Lower leg skin (tissue), 4 donors: ENCODE measurements at regions of chr6 and their contacts with region 1.

Region 1: GRCh38 chr6:12125396-12125795 is 113.3 kb downstream of the HIVEP1 start:
- DNase-seq: no peak
- H3K4me3 ChIP-seq: no peak overlapping the region
- CTCF ChIP-seq: no peak
- POLR2A ChIP-seq: no peak

Region 2: DNA sequence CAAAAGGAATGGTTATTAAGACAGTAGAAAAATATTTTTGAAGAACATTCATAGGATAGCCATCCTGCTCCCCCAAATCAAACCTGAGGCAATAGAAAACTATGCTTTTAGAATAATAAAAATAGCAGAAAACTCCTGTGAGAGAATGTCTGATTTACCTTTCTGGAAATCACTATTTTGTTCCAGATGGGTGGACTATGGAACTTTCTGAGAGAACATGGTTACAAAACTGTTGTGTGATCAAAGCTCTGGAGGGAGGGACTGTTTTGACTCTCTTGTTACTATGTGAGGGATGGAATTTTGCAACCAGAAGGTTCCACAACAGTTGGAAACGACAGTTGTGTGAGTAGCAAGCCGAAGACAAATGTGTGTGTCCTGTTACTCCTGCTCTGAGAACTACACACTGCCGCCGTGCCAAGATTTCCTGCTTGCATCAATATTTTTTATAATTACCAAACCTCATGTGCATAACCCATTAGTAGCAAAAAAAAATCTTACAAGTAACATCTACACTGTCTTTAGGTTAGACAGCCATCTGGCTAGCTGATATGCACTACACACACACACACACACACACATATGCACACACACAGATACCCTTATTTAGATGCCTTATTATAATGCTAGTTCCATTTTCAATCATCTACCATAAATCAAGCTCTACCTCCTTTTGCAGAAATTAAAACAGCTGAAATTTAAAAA is 124.2 kb before region 1 on chr6:
- intact Hi-C with region 1: no loop called
- DNase-seq: peak; percentile 62 to 92
- H3K4me3 ChIP-seq: no peak overlapping the region
- CTCF ChIP-seq: no peak
- POLR2A ChIP-seq: no peak

Region 3: DNA sequence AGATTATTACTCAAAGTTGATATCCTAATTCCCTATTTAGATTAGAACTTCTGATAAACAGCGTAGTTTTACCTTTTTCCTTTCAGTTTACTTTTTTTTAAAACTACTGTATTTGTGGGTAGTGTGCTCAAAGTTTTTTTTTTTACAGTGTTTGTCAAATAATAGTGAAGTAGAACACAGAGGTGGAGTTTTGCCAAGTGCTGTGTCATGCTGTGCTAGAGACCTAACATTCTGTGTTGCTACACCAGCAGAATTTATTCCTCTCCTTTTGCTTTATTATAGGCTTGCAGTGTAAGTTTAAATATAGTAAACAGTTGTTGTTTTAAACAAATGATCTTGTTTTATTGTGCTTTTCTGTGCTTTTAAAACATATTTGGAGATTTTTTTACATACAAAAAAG is 12.1 kb after region 1 on chr6:
- intact Hi-C with region 1: loop called (anchors 2 kb)
- DNase-seq: peak in 1 of 2 donors; percentile 38
- H3K4me3 ChIP-seq: no peak overlapping the region
- CTCF ChIP-seq: no peak
- POLR2A ChIP-seq: no peak